HCT116 (cell line): ENCODE measurements at regions of chr22 and their contacts with region 1.

Region 1: GRCh38 chr22:50250555-50251476 is at the start of gene HDAC10:
- DNase-seq: no peak
- ATAC-seq: peak; percentile 76
- H3K4me3 ChIP-seq: peak within 1 kb of the TSS; percentile 70 to 93
- H3K27ac ChIP-seq: peak within 1 kb of the TSS; percentile 99
- H3K4me1 ChIP-seq: peaks cover 17 to 59% of the 10 kb centered on the region in 2 experiments; a peak in 3 of 4 replicates
- H3K27me3 ChIP-seq: no peaks in the 10 kb centered on the region
- CTCF ChIP-seq: no peak
- POLR2A ChIP-seq: no peak
- RAD21 ChIP-seq: no peak
- total RNA-seq, gene HDAC10: 67.5 TPM

Region 2: DNA sequence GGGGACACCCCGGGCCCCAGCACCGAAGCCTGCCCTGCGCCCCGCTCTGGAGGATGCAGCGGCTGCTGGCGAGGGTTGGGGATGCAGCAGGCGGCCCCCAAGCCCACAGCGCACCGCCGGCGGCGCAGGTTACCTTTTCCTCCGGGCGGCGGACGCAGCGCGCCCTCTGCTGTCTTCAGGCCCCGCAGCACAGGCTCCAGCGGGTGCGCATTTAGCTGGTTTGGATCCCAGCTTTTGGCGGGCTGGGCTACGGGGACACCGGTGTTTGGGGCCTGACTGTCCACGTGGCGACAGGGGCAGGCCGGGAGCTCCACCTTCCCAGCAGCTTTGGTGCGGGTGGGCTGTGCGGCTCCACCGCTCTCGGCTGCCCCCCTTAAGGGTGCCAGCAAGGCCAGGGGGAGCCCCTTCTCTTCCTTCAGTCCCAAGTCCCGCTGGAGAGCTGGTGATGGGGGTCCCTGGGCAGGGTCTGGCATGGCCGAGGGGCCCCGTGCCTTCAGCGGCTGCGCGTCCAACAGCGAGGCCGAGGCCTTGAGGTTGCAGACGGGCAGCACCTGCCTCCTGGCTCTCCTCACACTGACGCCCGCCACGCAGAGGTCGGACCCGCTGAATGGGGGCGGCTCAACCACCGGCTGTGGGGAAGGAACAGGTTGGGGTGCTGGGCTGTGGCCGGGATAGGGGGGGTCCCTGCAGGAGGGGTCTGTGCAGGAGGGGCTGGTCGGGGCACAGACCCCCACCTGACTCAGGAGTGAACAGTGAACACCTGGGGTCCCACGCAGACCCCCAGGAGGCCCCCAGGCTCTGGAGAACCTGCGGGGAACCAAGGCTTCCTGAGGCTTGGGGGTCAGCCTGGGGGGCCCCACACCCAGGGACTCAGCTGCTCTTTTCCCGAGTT is 220.3 kb before region 1 on chr22:
- CTCF ChIA-PET with region 1: no interaction called
- POLR2A ChIA-PET with region 1: no interaction called
- RAD21 ChIA-PET with region 1: no interaction called
- intact Hi-C with region 1: no loop called
- DNase-seq: peak; percentile 75
- ATAC-seq: peak; percentile 95
- H3K4me3 ChIP-seq: peak overlapping the region; percentile 41 to 55
- H3K27ac ChIP-seq: no peak overlapping the region
- H3K4me1 ChIP-seq: peaks cover 4 to 13% of the 10 kb centered on the region in 2 experiments; a peak in 2 of 4 replicates
- H3K27me3 ChIP-seq: no peaks in the 10 kb centered on the region
- CTCF ChIP-seq: peak; percentile 82 to 98 (median 88)
- POLR2A ChIP-seq: no peak
- RAD21 ChIP-seq: peak; percentile 100

Region 3: DNA sequence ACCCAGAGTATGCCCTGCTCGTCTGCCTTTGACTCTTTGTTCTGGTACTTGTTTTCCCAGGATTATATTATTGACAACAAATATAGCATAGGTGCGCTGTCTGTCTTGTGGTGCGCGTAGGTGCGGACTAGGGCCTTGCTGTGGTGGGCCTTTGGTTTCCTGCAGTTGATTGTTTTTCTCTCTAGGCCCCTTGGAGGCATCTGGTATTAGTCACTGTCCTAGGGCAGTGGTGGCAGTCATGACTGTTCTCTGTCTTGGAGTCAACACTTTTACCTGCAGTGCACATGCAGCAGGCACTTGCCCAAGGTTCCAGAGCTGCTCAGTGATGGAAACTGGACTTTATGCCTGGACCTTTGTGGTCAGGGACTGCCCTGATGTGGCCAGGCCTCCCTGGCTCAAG is 110.9 kb after region 1 on chr22:
- CTCF ChIA-PET with region 1: no interaction called
- POLR2A ChIA-PET with region 1: no interaction called
- RAD21 ChIA-PET with region 1: interaction called in 1 of 2 experiments, 5 read pairs
- intact Hi-C with region 1: loop called (anchors 1 kb)
- DNase-seq: no peak
- ATAC-seq: no peak
- H3K4me3 ChIP-seq: no peak overlapping the region
- H3K27ac ChIP-seq: no peak overlapping the region
- H3K4me1 ChIP-seq: no peaks in the 10 kb centered on the region
- H3K27me3 ChIP-seq: no peaks in the 10 kb centered on the region
- CTCF ChIP-seq: no peak
- POLR2A ChIP-seq: no peak
- RAD21 ChIP-seq: no peak

Region 4: GRCh38 chr22:50498322-50498890 is 247.6 kb after region 1 on chr22:
- CTCF ChIA-PET with region 1: no interaction called
- POLR2A ChIA-PET with region 1: no interaction called
- RAD21 ChIA-PET with region 1: no interaction called
- intact Hi-C with region 1: loop called (anchors 5 kb)
- DNase-seq: peak; percentile 44
- ATAC-seq: peak; percentile 91
- H3K4me3 ChIP-seq: peak overlapping the region in 1 of 2 experiments; percentile 9; a peak in 1 of 4 replicates
- H3K27ac ChIP-seq: no peak overlapping the region
- H3K4me1 ChIP-seq: peaks cover 4 to 8% of the 10 kb centered on the region in 2 experiments; a peak in 3 of 4 replicates
- H3K27me3 ChIP-seq: no peaks in the 10 kb centered on the region
- CTCF ChIP-seq: peak; percentile 68 to 77 (median 76)
- POLR2A ChIP-seq: no peak
- RAD21 ChIP-seq: peak; percentile 82